Cardiac septum (tissue), 1 donor: ENCODE measurements at regions of chr2 and their contacts with region 1.

Region 1: GRCh38 chr2:28751252-28751955 is at the start of gene PPP1CB:
- DNase-seq: peak; percentile 98
- total RNA-seq, gene PPP1CB: 491 TPM

Region 2: DNA sequence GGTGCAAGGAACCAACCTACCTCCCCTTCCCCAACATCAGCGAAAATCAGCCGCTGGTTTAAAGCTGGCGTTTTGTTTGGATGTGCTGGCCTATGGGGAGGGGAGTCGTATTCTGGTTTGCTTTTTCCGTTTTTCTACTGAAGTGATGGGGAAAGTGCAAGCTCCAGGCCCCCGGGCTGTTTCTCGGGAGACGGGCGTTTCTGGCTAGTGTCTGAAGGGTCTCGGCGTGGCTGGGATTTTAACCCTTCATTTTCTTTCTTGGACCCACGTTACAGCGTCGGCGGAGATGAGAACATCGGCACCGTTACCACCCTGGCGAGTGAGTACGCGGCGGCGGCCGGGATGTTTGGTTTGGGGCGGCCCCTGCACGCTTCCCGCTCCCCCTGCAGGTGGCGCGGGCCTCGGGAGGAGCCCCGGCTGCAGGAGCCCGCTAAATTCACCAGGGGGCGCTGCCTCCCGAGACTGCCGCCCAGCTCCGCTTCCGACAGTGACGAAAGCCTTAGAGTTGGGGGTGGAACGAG is 184.8 kb before region 1 on chr2:
- intact Hi-C with region 1: loop called (anchors 2 kb)
- DNase-seq: peak; percentile 95

Region 3: DNA sequence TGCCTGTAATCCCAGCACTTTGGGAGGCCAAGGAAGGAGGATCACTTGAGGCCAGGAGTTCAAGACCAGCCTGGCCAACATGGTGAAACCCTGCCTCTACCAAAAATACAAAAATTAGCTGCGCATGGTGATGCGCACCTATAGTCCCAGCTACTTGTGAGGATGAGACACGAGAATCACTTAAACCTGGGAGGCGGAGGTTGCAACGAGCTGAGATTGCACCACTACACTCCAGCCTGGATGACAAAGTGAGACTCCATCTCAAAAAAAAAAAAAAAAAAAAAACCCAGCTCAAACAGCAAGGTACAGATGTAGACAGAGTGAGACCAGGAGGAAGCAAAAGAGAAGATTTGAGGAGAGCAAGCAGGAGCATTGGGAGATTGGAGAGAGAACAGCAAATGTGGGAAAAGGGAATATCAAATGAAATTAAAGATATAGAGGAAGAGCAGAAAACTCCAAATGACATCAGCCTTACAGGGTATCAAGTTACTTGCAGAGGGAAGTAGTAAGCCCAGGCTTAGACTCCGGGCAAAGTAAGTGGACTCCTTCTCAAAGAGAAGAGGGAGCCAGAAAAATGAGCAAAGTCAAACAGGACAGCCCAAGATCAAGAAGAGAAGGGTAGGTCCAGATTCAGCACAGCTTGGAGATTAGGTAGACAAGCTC is 93.2 kb before region 1 on chr2:
- intact Hi-C with region 1: loop called (anchors 2 kb)
- DNase-seq: no peak

Region 4: DNA sequence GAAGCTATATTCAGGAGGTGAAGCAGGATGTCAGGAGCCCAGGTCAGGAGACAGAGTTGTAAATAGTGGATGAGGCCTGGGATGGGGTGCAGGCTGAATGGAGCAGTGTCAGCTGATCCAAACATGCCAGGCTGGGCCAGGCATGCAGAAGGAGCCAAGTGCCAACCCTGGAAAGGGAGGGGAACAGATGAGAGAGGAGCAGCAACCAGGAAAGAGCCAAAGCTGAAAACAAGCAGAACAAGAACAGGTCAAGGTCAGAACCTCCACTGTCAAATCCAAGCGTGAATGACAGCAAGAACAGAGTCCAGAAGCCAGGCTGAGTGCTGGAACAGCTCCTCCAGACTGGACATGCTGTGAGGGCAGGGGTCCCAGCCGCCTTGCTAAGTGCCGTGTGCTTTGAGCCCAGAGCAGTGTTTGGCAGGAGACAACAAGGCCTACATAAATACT is 49.0 kb before region 1 on chr2:
- intact Hi-C with region 1: loop called (anchors 5 kb)
- DNase-seq: peak; percentile 83

Region 5: DNA sequence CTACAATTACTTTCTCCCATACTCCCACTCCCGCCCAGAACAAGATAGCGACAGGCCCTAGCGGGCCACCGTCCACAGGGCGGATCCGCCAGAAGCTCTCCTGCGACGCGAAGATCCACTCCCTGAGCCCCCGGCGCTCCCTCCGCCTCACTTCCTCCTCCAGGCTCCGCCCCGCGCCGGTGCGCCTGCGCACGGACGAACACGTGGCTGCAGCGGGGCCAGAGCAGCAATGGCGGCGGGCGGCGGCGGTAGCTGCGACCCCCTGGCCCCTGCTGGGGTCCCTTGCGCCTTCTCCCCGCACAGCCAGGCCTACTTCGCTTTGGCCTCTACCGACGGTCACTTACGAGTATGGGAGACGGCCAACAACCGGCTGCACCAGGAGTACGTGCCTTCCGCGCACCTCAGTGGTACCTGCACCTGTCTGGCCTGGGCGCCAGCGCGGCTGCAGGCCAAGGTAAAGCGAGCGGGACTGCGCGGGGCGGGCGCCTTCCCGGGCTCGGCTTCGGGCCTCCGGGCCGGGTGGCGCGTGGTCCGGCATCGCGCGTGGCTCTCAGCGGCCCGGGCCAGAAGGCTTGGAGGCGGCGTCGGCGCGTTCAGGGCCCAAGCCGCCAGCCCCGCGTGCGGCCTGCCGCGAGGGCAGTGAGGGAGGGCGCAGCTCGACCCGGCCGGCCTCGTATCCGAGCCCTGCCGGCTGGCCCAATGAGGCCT is 143.2 kb after region 1 on chr2 and contains the start of gene WDR43:
- intact Hi-C with region 1: loop called (anchors 10 kb)
- DNase-seq: peak; percentile 99
- total RNA-seq, gene WDR43: 25.9 TPM